ENCODE measurements at regions of chr5 and their contacts with region 1.

Region 1: GRCh38 chr5:179166886-179167841 is 107.0 kb downstream of the ZNF354C start:
- DNase-seq: peak; percentile 30 to 76 (median 52)
- ATAC-seq: peak; percentile 78
- H3K4me3 ChIP-seq: peak overlapping the region; percentile 32
- H3K4me3 Mint-ChIP-seq: no peak overlapping the region
- H3K27ac ChIP-seq: no peak overlapping the region
- H3K27ac Mint-ChIP-seq: no peak overlapping the region
- H3K4me1 ChIP-seq: peaks cover 15% of the 10 kb centered on the region
- H3K4me1 Mint-ChIP-seq: peaks cover 4% of the 10 kb centered on the region
- H3K27me3 ChIP-seq: peaks cover 5 to 12% of the 10 kb centered on the region in 2 experiments
- H3K27me3 Mint-ChIP-seq: peaks cover 5% of the 10 kb centered on the region
- CTCF ChIP-seq: peak; percentile 70

Region 2: GRCh38 chr5:179495906-179496455 is 328.8 kb after region 1 on chr5:
- CTCF ChIA-PET with region 1: no interaction called
- POLR2A ChIA-PET with region 1: no interaction called
- intact Hi-C with region 1: loop called in 1 of 2 experiments (anchors 1 kb)
- DNase-seq: no peak
- ATAC-seq: no peak
- H3K4me3 ChIP-seq: no peak overlapping the region
- H3K4me3 Mint-ChIP-seq: no peak overlapping the region
- H3K27ac ChIP-seq: no peak overlapping the region
- H3K27ac Mint-ChIP-seq: no peak overlapping the region
- H3K4me1 ChIP-seq: no peaks in the 10 kb centered on the region
- H3K4me1 Mint-ChIP-seq: no peaks in the 10 kb centered on the region
- H3K27me3 ChIP-seq: no peaks in the 10 kb centered on the region
- H3K27me3 Mint-ChIP-seq: peaks cover 5% of the 10 kb centered on the region
- CTCF ChIP-seq: no peak

Measured in CD4-positive, alpha-beta T cell (primary cell).